ENCODE measurements at regions of chr17 and their contacts with region 1.

Region 1: GRCh38 chr17:62065598-62066468 is 755 bp upstream of the MED13 start:
- DNase-seq: peak; percentile 91 to 97 (median 96)
- ATAC-seq: peak; percentile 97
- H3K4me3 ChIP-seq: peak overlapping the region; percentile 88
- H3K4me3 Mint-ChIP-seq: peak overlapping the region; percentile 93 to 99 (median 96)
- H3K27ac ChIP-seq: peak overlapping the region; percentile 100
- H3K27ac Mint-ChIP-seq: peak overlapping the region; percentile 92 to 100 (median 96)
- H3K4me1 ChIP-seq: peaks cover 16 to 23% of the 10 kb centered on the region in 2 donors
- H3K4me1 Mint-ChIP-seq: peaks cover 24 to 40% (median 34%) of the 10 kb centered on the region in 7 donors
- H3K27me3 ChIP-seq: no peaks in the 10 kb centered on the region
- H3K27me3 Mint-ChIP-seq: no peaks in the 10 kb centered on the region

Region 2: GRCh38 chr17:61412143-61412859 is 653.5 kb before region 1 on chr17:
- CTCF ChIA-PET with region 1: no interaction called
- POLR2A ChIA-PET with region 1: no interaction called
- intact Hi-C with region 1: loop called (anchors 1 to 5 kb)
- DNase-seq: peak; percentile 59 to 91 (median 81)
- ATAC-seq: peak; percentile 88
- H3K4me3 ChIP-seq: peak overlapping the region; percentile 64
- H3K4me3 Mint-ChIP-seq: peak overlapping the region in 9 of 10 donors; percentile 56 to 85 (median 76)
- H3K27ac ChIP-seq: peak overlapping the region; percentile 37
- H3K27ac Mint-ChIP-seq: no peak overlapping the region
- H3K4me1 ChIP-seq: peaks cover 7 to 15% of the 10 kb centered on the region in 2 donors
- H3K4me1 Mint-ChIP-seq: peaks cover 12 to 31% (median 23%) of the 10 kb centered on the region in 7 donors
- H3K27me3 ChIP-seq: peaks cover 0 to 23% of the 10 kb centered on the region in 2 donors
- H3K27me3 Mint-ChIP-seq: peaks cover 22 to 59% (median 28%) of the 10 kb centered on the region in 5 donors

Region 3: GRCh38 chr17:61619493-61619892 is 446.3 kb before region 1 on chr17:
- CTCF ChIA-PET with region 1: no interaction called
- POLR2A ChIA-PET with region 1: no interaction called
- intact Hi-C with region 1: no loop called
- DNase-seq: no peak
- ATAC-seq: no peak
- H3K4me3 ChIP-seq: no peak overlapping the region
- H3K4me3 Mint-ChIP-seq: no peak overlapping the region
- H3K27ac ChIP-seq: no peak overlapping the region
- H3K27ac Mint-ChIP-seq: no peak overlapping the region
- H3K4me1 ChIP-seq: no peaks in the 10 kb centered on the region
- H3K4me1 Mint-ChIP-seq: peaks cover 0 to 6% (median 0%) of the 10 kb centered on the region in 7 donors
- H3K27me3 ChIP-seq: no peaks in the 10 kb centered on the region
- H3K27me3 Mint-ChIP-seq: peaks cover 13 to 31% (median 24%) of the 10 kb centered on the region in 5 donors

Region 4: DNA sequence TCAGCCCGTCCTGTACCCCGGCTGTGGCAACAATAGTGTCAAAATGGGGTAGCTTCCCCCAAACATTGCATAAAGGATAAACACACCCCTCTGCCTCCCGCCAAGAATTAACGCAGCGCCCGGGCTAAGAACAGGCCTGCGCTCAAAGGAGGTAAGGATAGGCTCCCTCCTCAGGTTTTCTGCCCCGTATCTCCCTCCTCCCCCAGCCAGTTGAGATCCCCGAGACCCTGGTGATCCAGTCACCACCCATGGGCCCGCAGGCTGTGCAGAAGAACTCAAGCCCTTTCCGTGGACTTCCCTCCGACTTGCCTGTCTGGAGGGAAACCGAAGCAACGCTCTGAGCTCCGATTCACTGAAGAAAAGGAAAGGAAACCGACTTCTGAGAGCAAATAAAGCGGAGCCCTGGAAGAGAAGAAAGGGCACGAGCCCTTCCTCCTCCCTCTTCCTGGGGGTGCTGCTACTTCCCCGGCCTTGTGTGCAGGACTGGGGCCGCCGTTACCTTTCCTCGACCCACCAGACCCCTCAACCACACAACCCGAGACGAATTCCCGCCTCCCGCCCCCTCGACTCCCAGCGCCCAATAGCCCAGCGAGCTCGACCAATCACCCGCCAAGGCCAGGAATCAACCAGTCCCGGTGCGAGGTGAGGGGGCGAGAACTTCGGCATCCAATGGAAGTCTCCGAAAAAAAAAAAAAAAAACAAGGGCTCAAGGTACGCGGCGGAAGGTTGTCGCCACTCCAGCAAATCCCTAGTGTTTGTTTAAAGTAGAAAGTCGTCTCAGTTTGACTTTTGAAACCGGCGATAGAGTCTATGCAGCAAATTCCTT is 202.6 kb before region 1 on chr17 and contains the start of gene BRIP1:
- CTCF ChIA-PET with region 1: interaction called, 5 read pairs
- POLR2A ChIA-PET with region 1: interaction called, 3 read pairs
- intact Hi-C with region 1: loop called (anchors 1 kb)
- DNase-seq: peak; percentile 61 to 90 (median 85)
- ATAC-seq: peak; percentile 99
- H3K4me3 ChIP-seq: peak within 1 kb of the TSS; percentile 88
- H3K4me3 Mint-ChIP-seq: peak within 1 kb of the TSS; percentile 88 to 98 (median 96)
- H3K27ac ChIP-seq: peak within 1 kb of the TSS; percentile 70
- H3K27ac Mint-ChIP-seq: peak within 1 kb of the TSS; percentile 86 to 97 (median 93)
- H3K4me1 ChIP-seq: peaks cover 5 to 11% of the 10 kb centered on the region in 2 donors
- H3K4me1 Mint-ChIP-seq: peaks cover 8 to 36% (median 26%) of the 10 kb centered on the region in 7 donors
- H3K27me3 ChIP-seq: no peaks in the 10 kb centered on the region
- H3K27me3 Mint-ChIP-seq: no peaks in the 10 kb centered on the region
- total RNA-seq, gene BRIP1: 1.6 to 19.9 (median 1.8) TPM

Region 5: GRCh38 chr17:61966191-61966590 is 99.6 kb before region 1 on chr17:
- CTCF ChIA-PET with region 1: interaction called, 3 read pairs
- POLR2A ChIA-PET with region 1: no interaction called
- intact Hi-C with region 1: loop called in 1 of 2 experiments (anchors 5 kb)
- DNase-seq: no peak
- ATAC-seq: no peak
- H3K4me3 ChIP-seq: no peak overlapping the region
- H3K4me3 Mint-ChIP-seq: no peak overlapping the region
- H3K27ac ChIP-seq: no peak overlapping the region
- H3K27ac Mint-ChIP-seq: peak overlapping the region in 2 of 9 donors; percentile 14 to 54
- H3K4me1 ChIP-seq: no peaks in the 10 kb centered on the region
- H3K4me1 Mint-ChIP-seq: peaks cover 0 to 4% (median 0%) of the 10 kb centered on the region in 7 donors
- H3K27me3 ChIP-seq: no peaks in the 10 kb centered on the region
- H3K27me3 Mint-ChIP-seq: no peaks in the 10 kb centered on the region

Region 6: GRCh38 chr17:62737513-62737912 is 671.7 kb after region 1 on chr17:
- CTCF ChIA-PET with region 1: no interaction called
- POLR2A ChIA-PET with region 1: no interaction called
- intact Hi-C with region 1: no loop called
- DNase-seq: no peak
- ATAC-seq: no peak
- H3K4me3 ChIP-seq: no peak overlapping the region
- H3K4me3 Mint-ChIP-seq: no peak overlapping the region
- H3K27ac ChIP-seq: no peak overlapping the region
- H3K27ac Mint-ChIP-seq: no peak overlapping the region
- H3K4me1 ChIP-seq: no peaks in the 10 kb centered on the region
- H3K4me1 Mint-ChIP-seq: no peaks in the 10 kb centered on the region
- H3K27me3 ChIP-seq: no peaks in the 10 kb centered on the region
- H3K27me3 Mint-ChIP-seq: peaks cover 0 to 35% (median 0%) of the 10 kb centered on the region in 5 donors